ENCODE measurements at regions of chr11 and their contacts with region 1.

Region 1: GRCh38 chr11:57712256-57713150 is at the start of gene TMX2:
- DNase-seq: peak; percentile 94
- H3K4me3 Mint-ChIP-seq: peak within 1 kb of the TSS; percentile 94
- H3K27ac Mint-ChIP-seq: peak within 1 kb of the TSS; percentile 89
- H3K4me1 Mint-ChIP-seq: peaks cover 53% of the 10 kb centered on the region
- H3K27me3 Mint-ChIP-seq: no peaks in the 10 kb centered on the region
- total RNA-seq, gene TMX2: 54.9 to 57.2 TPM

Region 2: GRCh38 chr11:57324886-57325734 is 387.4 kb before region 1 on chr11 and contains the start of gene TNKS1BP1:
- CTCF ChIA-PET with region 1: no interaction called
- POLR2A ChIA-PET with region 1: no interaction called
- intact Hi-C with region 1: loop called (anchors 1 kb)
- DNase-seq: peak; percentile 95
- H3K4me3 Mint-ChIP-seq: peak within 1 kb of the TSS; percentile 79
- H3K27ac Mint-ChIP-seq: peak within 1 kb of the TSS; percentile 95
- H3K4me1 Mint-ChIP-seq: peaks cover 42% of the 10 kb centered on the region
- H3K27me3 Mint-ChIP-seq: no peaks in the 10 kb centered on the region
- total RNA-seq, gene TNKS1BP1: 14.0 to 15.1 TPM

Region 3: GRCh38 chr11:57406337-57406904 is 306.1 kb before region 1 on chr11:
- CTCF ChIA-PET with region 1: no interaction called
- POLR2A ChIA-PET with region 1: no interaction called
- intact Hi-C with region 1: loop called (anchors 5 kb)
- DNase-seq: peak; percentile 75
- H3K4me3 Mint-ChIP-seq: no peak overlapping the region
- H3K27ac Mint-ChIP-seq: peak overlapping the region; percentile 84
- H3K4me1 Mint-ChIP-seq: peaks cover 61% of the 10 kb centered on the region
- H3K27me3 Mint-ChIP-seq: no peaks in the 10 kb centered on the region

Region 4: DNA sequence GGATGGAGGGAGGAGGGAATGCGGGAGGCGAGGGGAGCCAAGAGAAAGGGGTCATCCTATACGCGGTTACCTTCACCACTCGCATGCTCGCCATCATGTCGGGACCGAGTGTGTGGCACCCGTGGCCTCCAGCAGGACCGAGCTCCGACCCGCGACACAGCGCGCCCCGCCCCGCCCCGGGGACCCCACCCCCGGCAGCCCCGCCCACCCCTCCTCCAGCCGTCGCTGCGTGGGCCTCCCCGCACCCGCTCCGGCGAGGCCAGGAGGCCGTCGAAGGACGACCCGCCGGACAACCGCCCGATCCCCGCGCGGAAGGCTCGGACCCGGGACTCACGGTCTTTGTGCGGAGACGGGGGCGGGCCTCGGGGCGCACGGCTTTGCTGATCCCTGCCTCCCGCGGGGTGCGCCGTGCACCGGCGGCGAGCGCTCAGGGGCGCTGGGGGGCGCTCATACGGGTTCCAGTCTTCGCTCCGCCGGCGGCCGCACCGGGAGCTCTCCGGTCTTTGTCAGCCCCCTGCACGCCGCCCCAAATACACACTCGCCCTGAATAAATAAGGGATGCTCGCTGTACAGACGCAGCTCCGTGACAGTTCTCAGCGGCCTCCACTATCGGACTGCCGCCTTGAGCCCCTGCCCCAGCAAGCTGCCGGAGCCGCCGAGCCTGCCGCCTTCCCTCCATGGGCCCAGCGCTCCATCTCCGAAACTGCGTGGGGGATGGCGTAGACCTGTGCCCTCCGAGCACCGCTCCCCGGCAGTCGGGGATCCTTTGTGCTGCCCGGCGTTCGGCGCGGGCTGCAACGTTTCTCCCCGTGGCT is 144.8 kb before region 1 on chr11 and contains the start of gene UBE2L6:
- CTCF ChIA-PET with region 1: interaction called, 3 read pairs
- POLR2A ChIA-PET with region 1: no interaction called
- intact Hi-C with region 1: loop called (anchors 1 kb)
- DNase-seq: peak; percentile 70
- H3K4me3 Mint-ChIP-seq: peak within 1 kb of the TSS; percentile 92
- H3K27ac Mint-ChIP-seq: peak within 1 kb of the TSS; percentile 98
- H3K4me1 Mint-ChIP-seq: peaks cover 31% of the 10 kb centered on the region
- H3K27me3 Mint-ChIP-seq: no peaks in the 10 kb centered on the region
- total RNA-seq, gene UBE2L6: 152 to 162 TPM

Region 5: DNA sequence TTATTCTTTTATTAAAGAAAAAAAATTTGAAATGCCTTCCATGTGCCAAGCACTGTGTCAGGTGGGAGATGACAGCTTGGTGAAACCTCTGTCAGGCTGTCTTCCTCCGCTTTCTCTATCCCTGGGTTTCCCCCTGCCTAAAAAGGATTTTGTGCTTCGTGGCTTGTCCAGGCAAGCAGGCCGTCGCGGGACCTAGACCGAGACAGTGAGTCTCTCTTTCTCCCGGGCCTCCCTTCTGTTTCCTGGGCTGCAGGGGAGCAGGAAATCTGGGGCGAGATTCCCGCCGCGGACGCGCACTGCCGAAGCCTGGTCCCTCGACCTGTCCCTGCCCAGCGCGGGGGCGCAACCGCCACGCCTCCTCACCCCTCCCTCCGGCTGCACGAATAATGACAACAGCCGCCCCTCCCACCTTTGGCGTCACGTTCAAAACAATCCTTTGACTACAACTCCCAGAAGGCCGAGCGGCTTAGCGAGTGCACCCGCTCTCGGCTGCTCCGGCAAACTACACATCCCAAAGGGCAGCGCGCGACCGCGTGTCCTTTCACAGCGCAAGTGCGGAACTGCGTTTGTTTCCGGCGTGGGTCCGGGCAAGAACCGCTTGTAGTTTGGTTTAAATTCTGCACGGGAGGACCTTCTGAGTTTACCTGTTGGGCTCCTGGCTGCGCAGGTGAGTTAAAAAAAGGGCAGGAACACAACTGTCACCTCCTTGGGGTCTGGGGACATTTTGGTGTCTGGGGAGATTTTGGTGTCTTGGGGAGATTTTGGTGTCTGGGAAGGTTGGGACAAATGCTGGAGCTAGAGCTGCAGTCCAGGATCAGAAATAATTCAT is 55.1 kb before region 1 on chr11 and contains the start of gene CLP1:
- CTCF ChIA-PET with region 1: no interaction called
- POLR2A ChIA-PET with region 1: no interaction called
- intact Hi-C with region 1: loop called (anchors 1 kb)
- DNase-seq: peak; percentile 100
- H3K4me3 Mint-ChIP-seq: peak within 1 kb of the TSS; percentile 100
- H3K27ac Mint-ChIP-seq: peak within 1 kb of the TSS; percentile 94
- H3K4me1 Mint-ChIP-seq: peaks cover 33% of the 10 kb centered on the region
- H3K27me3 Mint-ChIP-seq: no peaks in the 10 kb centered on the region
- total RNA-seq, gene CLP1: 13.9 to 15.2 TPM

Region 6: GRCh38 chr11:57792060-57792541 is 79.6 kb after region 1 on chr11:
- CTCF ChIA-PET with region 1: no interaction called
- POLR2A ChIA-PET with region 1: no interaction called
- intact Hi-C with region 1: loop called (anchors 1 kb)
- DNase-seq: peak; percentile 90
- H3K4me3 Mint-ChIP-seq: peak overlapping the region; percentile 55
- H3K27ac Mint-ChIP-seq: peak overlapping the region; percentile 86
- H3K4me1 Mint-ChIP-seq: peaks cover 34% of the 10 kb centered on the region
- H3K27me3 Mint-ChIP-seq: peaks cover 1% of the 10 kb centered on the region